ENCODE measurements at regions of chr1 and their contacts with region 1.

Region 1: GRCh38 chr1:186482661-186483255 is 21.8 kb upstream of the PDC start:
- DNase-seq: peak; percentile 75
- ATAC-seq: peak; percentile 94
- H3K4me3 ChIP-seq: no peak overlapping the region
- H3K27ac ChIP-seq: no peak overlapping the region
- H3K4me1 ChIP-seq: no peaks in the 10 kb centered on the region
- H3K27me3 ChIP-seq: no peaks in the 10 kb centered on the region
- CTCF ChIP-seq: peak; percentile 96
- POLR2A ChIP-seq: peak; percentile 51
- RAD21 ChIP-seq: peak; percentile 99

Region 2: GRCh38 chr1:186404454-186405051 is 78.2 kb before region 1 on chr1:
- CTCF ChIA-PET with region 1: interaction called, 3 read pairs
- POLR2A ChIA-PET with region 1: no interaction called
- dilution Hi-C with region 1: no loop called
- in situ Hi-C with region 1: no loop called
- intact Hi-C with region 1: loop called (anchors 2 kb)
- DNase-seq: peak; percentile 76
- ATAC-seq: peak; percentile 92
- H3K4me3 ChIP-seq: no peak overlapping the region
- H3K27ac ChIP-seq: no peak overlapping the region
- H3K4me1 ChIP-seq: no peaks in the 10 kb centered on the region; the same call in 1 of the 2 replicates
- H3K27me3 ChIP-seq: no peaks in the 10 kb centered on the region
- CTCF ChIP-seq: peak; percentile 80
- POLR2A ChIP-seq: no peak
- RAD21 ChIP-seq: peak; percentile 72

Region 3: GRCh38 chr1:186605762-186606350 is 123.1 kb after region 1 on chr1:
- CTCF ChIA-PET with region 1: interaction called, 4 read pairs
- POLR2A ChIA-PET with region 1: no interaction called
- dilution Hi-C with region 1: no loop called
- in situ Hi-C with region 1: no loop called
- intact Hi-C with region 1: loop called (anchors 1 kb)
- DNase-seq: peak; percentile 59
- ATAC-seq: peak; percentile 88
- H3K4me3 ChIP-seq: no peak overlapping the region
- H3K27ac ChIP-seq: no peak overlapping the region
- H3K4me1 ChIP-seq: no peaks in the 10 kb centered on the region
- H3K27me3 ChIP-seq: no peaks in the 10 kb centered on the region
- CTCF ChIP-seq: peak; percentile 68
- POLR2A ChIP-seq: no peak
- RAD21 ChIP-seq: peak; percentile 81

Region 4: DNA sequence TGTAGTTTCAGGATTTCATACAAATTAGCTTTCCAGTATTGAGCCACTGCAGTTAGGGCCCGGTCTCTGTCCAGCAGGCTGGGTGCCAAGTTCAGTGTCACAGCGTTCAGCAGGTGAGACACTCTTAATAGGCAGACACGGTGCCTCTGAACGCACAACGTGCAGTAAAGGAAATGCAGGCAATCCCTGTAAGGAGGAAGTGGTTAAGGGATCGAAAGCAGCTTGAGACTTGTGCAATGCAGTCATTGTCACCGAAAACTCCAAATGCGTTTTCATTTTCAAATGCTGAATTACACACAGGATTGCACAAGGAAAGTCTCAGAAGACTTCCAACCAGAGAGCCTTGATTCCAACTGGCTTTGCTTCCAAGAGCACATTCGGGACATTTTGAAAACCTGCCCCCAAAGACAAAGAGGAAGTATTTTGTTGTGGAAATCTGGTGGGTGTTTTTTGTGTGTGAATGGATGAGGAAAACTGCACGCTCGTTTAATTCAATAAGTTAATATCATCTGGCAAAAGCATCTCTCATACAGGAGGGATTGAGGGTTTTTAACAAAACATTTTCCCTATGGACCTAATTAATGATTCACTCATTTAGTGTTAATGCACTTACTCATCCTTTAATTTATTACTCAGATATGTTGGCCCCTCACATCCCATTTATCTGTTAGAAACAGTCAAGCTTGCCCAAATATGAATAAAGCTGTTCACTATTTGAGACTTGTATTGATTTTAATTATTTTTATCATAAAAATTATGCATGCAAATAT is 135.8 kb after region 1 on chr1:
- CTCF ChIA-PET with region 1: no interaction called
- POLR2A ChIA-PET with region 1: no interaction called
- dilution Hi-C with region 1: no loop called
- in situ Hi-C with region 1: no loop called
- intact Hi-C with region 1: no loop called
- DNase-seq: no peak
- ATAC-seq: no peak
- H3K4me3 ChIP-seq: no peak overlapping the region
- H3K27ac ChIP-seq: no peak overlapping the region
- H3K4me1 ChIP-seq: no peaks in the 10 kb centered on the region
- H3K27me3 ChIP-seq: no peaks in the 10 kb centered on the region
- CTCF ChIP-seq: no peak
- POLR2A ChIP-seq: no peak
- RAD21 ChIP-seq: no peak

Region 5: DNA sequence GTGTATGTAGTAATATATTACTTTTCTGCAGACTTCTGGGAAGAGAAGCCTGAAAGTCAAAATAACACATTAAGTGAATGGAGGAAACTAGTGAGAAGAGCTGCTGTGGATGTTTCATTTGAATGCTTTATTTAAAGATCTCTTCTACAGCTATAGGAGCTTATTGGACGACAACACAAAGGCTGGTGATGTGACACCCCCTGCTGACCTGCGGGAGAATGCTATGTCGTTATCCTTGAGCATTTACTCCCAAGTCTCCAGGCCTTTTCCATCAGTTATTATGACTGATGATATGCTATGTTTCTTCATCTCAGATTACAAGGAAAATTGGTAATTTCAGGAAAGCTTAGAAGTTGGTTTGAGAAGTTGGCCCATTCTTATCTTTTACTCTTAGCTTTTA is 323.7 kb after region 1 on chr1:
- CTCF ChIA-PET with region 1: no interaction called
- POLR2A ChIA-PET with region 1: no interaction called
- dilution Hi-C with region 1: no loop called
- in situ Hi-C with region 1: no loop called
- intact Hi-C with region 1: loop called (anchors 5 kb)
- DNase-seq: peak; percentile 24
- ATAC-seq: no peak
- H3K4me3 ChIP-seq: no peak overlapping the region
- H3K27ac ChIP-seq: no peak overlapping the region
- H3K4me1 ChIP-seq: no peaks in the 10 kb centered on the region
- H3K27me3 ChIP-seq: no peaks in the 10 kb centered on the region
- CTCF ChIP-seq: no peak
- POLR2A ChIP-seq: no peak
- RAD21 ChIP-seq: peak; percentile 38; the same call in 1 of the 2 replicates

Region 6: GRCh38 chr1:186915555-186915954 is 432.8 kb after region 1 on chr1:
- CTCF ChIA-PET with region 1: no interaction called
- POLR2A ChIA-PET with region 1: no interaction called
- dilution Hi-C with region 1: no loop called
- in situ Hi-C with region 1: no loop called
- intact Hi-C with region 1: loop called (anchors 1 kb)
- DNase-seq: no peak
- ATAC-seq: no peak
- H3K4me3 ChIP-seq: no peak overlapping the region
- H3K27ac ChIP-seq: no peak overlapping the region
- H3K4me1 ChIP-seq: no peaks in the 10 kb centered on the region
- H3K27me3 ChIP-seq: no peaks in the 10 kb centered on the region
- CTCF ChIP-seq: 0 out of 2 replicates have a peak, but pooled peaks have one; percentile 18
- POLR2A ChIP-seq: no peak
- RAD21 ChIP-seq: peak; percentile 22; the same call in 1 of the 2 replicates